CD14-positive monocyte (primary cell): ENCODE measurements at regions of chr19 and their contacts with region 1.

Region 1: DNA sequence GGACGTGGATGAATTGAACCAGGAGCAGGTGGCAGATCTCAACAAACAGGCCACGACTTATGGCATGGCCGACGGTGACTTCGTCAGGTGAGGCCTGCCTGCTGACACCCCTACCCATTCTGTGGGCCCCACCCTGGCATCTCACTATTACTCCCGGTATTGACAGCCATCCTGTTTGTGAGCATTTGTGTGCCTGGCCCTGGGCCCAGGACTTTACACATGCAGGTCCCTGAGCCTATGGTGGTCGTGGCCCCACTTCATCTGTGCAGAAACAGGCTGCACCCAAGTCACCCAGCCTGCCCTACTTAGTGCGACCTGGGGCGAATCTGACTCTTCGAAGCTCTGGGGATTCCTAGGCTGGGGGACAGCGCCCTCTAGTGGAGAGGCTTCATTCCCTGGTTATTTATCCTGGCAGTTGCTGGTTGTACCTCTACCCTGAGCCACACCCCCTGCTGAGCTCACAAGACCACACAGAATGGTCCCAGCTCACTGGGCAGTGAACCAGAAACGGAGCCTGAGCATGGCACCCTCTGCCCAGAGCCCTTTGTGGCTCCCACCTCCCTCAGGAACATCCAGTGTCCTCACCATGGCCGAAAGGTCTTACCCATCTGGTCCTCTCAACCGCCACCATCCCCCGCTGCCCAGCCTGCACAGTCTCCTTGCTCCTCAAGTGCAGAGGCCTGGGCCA is 16.9 kb downstream of the ZNF296 start:
- DNase-seq: peak; percentile 72 to 76 (median 76)
- H3K4me3 ChIP-seq: no peak overlapping the region
- H3K4me3 Mint-ChIP-seq: no peak overlapping the region
- H3K27ac ChIP-seq: peak overlapping the region in 1 of 2 donors; percentile 1
- H3K27ac Mint-ChIP-seq: peak overlapping the region in 5 of 7 donors; percentile 29 to 79 (median 62)
- H3K4me1 ChIP-seq: no peaks in the 10 kb centered on the region
- H3K4me1 Mint-ChIP-seq: no peaks in the 10 kb centered on the region
- H3K27me3 ChIP-seq: no peaks in the 10 kb centered on the region
- H3K27me3 Mint-ChIP-seq: peaks cover 0 to 3% (median 2%) of the 10 kb centered on the region in 3 donors
- CTCF ChIP-seq: peak; percentile 92

Region 2: GRCh38 chr19:44903602-44904425 is 155.6 kb before region 1 on chr19:
- intact Hi-C with region 1: loop called (anchors 5 kb)
- DNase-seq: peak; percentile 43 to 59 (median 44)
- H3K4me3 ChIP-seq: no peak overlapping the region
- H3K4me3 Mint-ChIP-seq: peak overlapping the region in 1 of 2 donors; percentile 11
- H3K27ac ChIP-seq: no peak overlapping the region
- H3K27ac Mint-ChIP-seq: no peak overlapping the region
- H3K4me1 ChIP-seq: peaks cover 0 to 11% of the 10 kb centered on the region in 2 donors
- H3K4me1 Mint-ChIP-seq: peaks cover 11% of the 10 kb centered on the region
- H3K27me3 ChIP-seq: peaks cover 5 to 26% of the 10 kb centered on the region in 2 donors
- H3K27me3 Mint-ChIP-seq: peaks cover 27 to 36% (median 30%) of the 10 kb centered on the region in 3 donors
- CTCF ChIP-seq: peak; percentile 99

Region 3: GRCh38 chr19:44988896-44989556 is 70.4 kb before region 1 on chr19:
- intact Hi-C with region 1: loop called (anchors 1 to 2 kb)
- DNase-seq: peak; percentile 32 to 60 (median 45)
- H3K4me3 ChIP-seq: no peak overlapping the region
- H3K4me3 Mint-ChIP-seq: no peak overlapping the region
- H3K27ac ChIP-seq: no peak overlapping the region
- H3K27ac Mint-ChIP-seq: peak overlapping the region in 1 of 7 donors; percentile 69
- H3K4me1 ChIP-seq: peaks cover 0 to 4% of the 10 kb centered on the region in 2 donors
- H3K4me1 Mint-ChIP-seq: peaks cover 6% of the 10 kb centered on the region
- H3K27me3 ChIP-seq: no peaks in the 10 kb centered on the region
- H3K27me3 Mint-ChIP-seq: peaks cover 0 to 2% (median 0%) of the 10 kb centered on the region in 3 donors
- CTCF ChIP-seq: peak; percentile 60

Region 4: GRCh38 chr19:45016388-45017319 is 42.8 kb before region 1 on chr19:
- intact Hi-C with region 1: loop called (anchors 1 to 2 kb)
- DNase-seq: peak; percentile 51 to 57 (median 54)
- H3K4me3 ChIP-seq: no peak overlapping the region
- H3K4me3 Mint-ChIP-seq: no peak overlapping the region
- H3K27ac ChIP-seq: no peak overlapping the region
- H3K27ac Mint-ChIP-seq: peak overlapping the region in 2 of 7 donors; percentile 69 to 77
- H3K4me1 ChIP-seq: no peaks in the 10 kb centered on the region
- H3K4me1 Mint-ChIP-seq: no peaks in the 10 kb centered on the region
- H3K27me3 ChIP-seq: no peaks in the 10 kb centered on the region
- H3K27me3 Mint-ChIP-seq: peaks cover 0 to 1% (median 0%) of the 10 kb centered on the region in 3 donors
- CTCF ChIP-seq: peak; percentile 74